ENCODE measurements at regions of chr4 and their contacts with region 1.

Region 1: GRCh38 chr4:183645326-183645725 is 13.7 kb downstream of the RWDD4 start:
- DNase-seq: no peak
- H3K4me3 ChIP-seq: no peak overlapping the region
- H3K27ac ChIP-seq: no peak overlapping the region
- H3K4me1 ChIP-seq: no peaks in the 10 kb centered on the region
- H3K27me3 ChIP-seq: no peaks in the 10 kb centered on the region
- CTCF ChIP-seq: no peak
- EP300 ChIP-seq: no peak
- POLR2A ChIP-seq: no peak

Region 2: DNA sequence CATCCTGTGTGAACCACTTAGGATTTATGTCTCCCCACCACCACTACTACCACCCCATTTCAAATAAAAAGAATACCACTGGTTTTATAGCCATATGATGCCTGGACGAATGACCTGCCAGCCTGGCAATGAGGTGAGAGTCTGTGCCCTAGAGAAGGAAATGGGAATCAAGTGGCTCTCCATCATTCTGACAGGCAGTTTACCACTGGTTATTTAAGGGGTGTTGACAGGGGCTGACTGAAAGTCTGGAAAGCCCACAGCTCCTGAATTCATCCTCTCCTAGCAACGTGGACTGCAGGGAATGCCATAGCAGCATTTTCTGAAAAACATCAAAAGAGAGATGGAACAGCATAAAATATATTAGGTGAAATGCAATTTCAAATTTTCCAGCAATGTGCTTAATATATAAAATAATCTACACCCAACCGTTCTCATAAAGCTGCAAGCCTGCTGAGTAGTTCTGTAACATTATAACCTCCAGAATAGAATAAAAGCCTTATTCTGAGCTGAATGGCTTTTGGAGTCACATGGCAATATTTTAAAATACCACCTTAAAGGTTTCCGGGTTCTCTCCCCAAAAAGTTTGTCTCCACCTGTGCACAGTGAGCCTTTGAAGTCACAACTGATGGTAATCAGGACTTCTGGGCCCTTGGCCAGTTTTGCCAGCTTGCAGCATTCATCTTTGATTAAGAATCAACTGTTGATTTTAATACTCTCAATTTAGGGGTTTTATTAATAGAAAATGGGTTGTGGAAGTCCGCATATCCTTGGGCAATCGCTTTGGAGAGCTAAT is 849.7 kb before region 1 on chr4:
- intact Hi-C with region 1: loop called (anchors 5 kb)
- DNase-seq: no peak
- H3K4me3 ChIP-seq: no peak overlapping the region
- H3K27ac ChIP-seq: no peak overlapping the region
- H3K4me1 ChIP-seq: no peaks in the 10 kb centered on the region
- H3K27me3 ChIP-seq: no peaks in the 10 kb centered on the region
- CTCF ChIP-seq: no peak
- EP300 ChIP-seq: no peak
- POLR2A ChIP-seq: no peak

Region 3: GRCh38 chr4:183971929-183972490 is 326.7 kb after region 1 on chr4:
- intact Hi-C with region 1: no loop called
- DNase-seq: no peak
- H3K4me3 ChIP-seq: no peak overlapping the region
- H3K27ac ChIP-seq: no peak overlapping the region
- H3K4me1 ChIP-seq: no peaks in the 10 kb centered on the region
- H3K27me3 ChIP-seq: no peaks in the 10 kb centered on the region
- CTCF ChIP-seq: no peak
- EP300 ChIP-seq: no peak
- POLR2A ChIP-seq: no peak

Measured in sigmoid colon (tissue), 7 donors.